ENCODE measurements at regions of chr2 and their contacts with region 1.

Region 1: DNA sequence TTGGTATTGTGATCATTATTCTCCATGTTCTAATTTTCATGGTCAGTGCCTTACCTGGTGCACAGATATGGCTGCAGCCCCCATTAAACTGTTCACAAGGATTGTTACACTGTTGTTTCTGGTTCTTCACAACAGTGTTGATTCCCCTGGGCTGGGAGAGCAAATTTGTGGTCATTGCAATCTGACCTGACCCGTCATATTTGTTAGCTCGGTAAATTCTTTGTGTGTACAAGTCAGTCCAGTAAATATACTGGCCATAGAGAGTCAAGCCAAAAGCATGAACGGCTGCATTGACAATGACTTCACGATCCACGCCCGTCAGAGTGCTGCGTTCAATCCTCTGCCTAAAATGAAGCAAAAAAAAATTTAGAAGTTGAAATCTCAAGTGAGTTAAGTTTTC is 134.6 kb downstream of the DHRS9 start:
- DNase-seq: no peak
- ATAC-seq: no peak
- H3K4me3 ChIP-seq: no peak overlapping the region
- H3K27ac ChIP-seq: no peak overlapping the region
- H3K4me1 ChIP-seq: peaks cover 0 to 3% of the 10 kb centered on the region in 2 experiments; a peak in 1 of 5 replicates
- H3K27me3 ChIP-seq: peaks cover 5 to 10% of the 10 kb centered on the region in 2 experiments
- CTCF ChIP-seq: no peak
- EP300 ChIP-seq: no peak
- POLR2A ChIP-seq: no peak
- RAD21 ChIP-seq: no peak

Region 2: GRCh38 chr2:169131587-169132512 is 72.1 kb before region 1 on chr2:
- CTCF ChIA-PET with region 1: no interaction called
- POLR2A ChIA-PET with region 1: no interaction called
- in situ Hi-C with region 1: no loop called
- intact Hi-C with region 1: loop called (anchors 5 kb)
- DNase-seq: peak; percentile 58 to 76 (median 70)
- ATAC-seq: peak; percentile 14; the same call in 2 of the 3 replicates
- H3K4me3 ChIP-seq: no peak overlapping the region
- H3K27ac ChIP-seq: no peak overlapping the region
- H3K4me1 ChIP-seq: peaks cover 13 to 41% of the 10 kb centered on the region in 2 experiments
- H3K27me3 ChIP-seq: no peaks in the 10 kb centered on the region
- CTCF ChIP-seq: peak; percentile 51 to 83 (median 76); a peak in 5 of 6 replicates
- EP300 ChIP-seq: no peak
- POLR2A ChIP-seq: no peak
- RAD21 ChIP-seq: peak; percentile 59 to 66

Measured in K562 (cell line).